WTC11 (cell line): ENCODE measurements at regions of chr17 and their contacts with region 1.

Region 1: DNA sequence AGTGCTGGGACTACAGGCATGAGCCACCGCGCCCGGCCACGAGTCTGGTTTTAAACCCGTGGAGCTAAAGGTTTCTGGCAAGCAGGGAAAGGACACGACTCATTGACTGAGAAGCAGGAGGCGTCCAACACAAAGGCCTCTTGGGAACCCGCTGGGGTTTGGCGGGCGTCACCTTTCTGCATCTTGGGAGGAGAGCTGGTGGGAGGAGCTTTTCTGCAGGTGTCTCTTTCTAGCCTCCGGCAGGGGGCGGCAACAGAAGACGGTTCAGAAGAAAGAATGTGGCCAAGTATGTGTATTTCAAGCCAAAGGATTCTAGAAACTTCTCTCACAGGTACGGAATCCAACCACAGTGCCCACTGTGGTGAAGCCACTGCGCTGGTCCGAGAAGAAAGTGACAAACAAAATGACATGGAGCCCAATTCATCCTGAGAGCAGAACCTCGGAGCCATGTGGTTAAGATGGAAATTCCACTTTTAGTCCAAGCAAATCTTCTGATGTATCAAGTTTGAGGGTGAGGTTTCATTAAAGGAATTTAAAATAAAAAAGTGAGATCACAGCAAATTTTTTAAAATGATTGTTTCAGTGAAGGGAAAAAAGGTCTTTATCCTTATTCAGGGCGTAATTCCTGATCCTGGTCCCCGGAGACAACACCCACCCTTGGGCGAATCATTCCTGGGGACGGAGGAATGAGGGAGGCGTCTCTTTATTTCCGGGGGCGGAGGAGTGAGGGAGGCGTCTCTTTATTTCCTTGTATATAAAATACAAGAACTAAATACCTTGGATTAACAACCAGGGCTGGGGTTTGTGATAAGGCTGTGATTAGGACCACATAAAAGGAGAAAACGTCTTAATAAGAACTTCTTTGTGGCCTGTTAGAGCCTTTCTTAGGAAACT is 97.6 kb downstream of the MRM3 start:
- DNase-seq: peak; percentile 94
- ATAC-seq: peak; percentile 90
- H3K4me3 Mint-ChIP-seq: peak overlapping the region; percentile 21; the same call in 1 of the 2 replicates
- H3K27ac Mint-ChIP-seq: peak overlapping the region; percentile 97
- H3K4me1 Mint-ChIP-seq: peaks cover 67% of the 10 kb centered on the region
- H3K27me3 Mint-ChIP-seq: no peaks in the 10 kb centered on the region
- CTCF ChIP-seq: peak; percentile 59

Region 2: DNA sequence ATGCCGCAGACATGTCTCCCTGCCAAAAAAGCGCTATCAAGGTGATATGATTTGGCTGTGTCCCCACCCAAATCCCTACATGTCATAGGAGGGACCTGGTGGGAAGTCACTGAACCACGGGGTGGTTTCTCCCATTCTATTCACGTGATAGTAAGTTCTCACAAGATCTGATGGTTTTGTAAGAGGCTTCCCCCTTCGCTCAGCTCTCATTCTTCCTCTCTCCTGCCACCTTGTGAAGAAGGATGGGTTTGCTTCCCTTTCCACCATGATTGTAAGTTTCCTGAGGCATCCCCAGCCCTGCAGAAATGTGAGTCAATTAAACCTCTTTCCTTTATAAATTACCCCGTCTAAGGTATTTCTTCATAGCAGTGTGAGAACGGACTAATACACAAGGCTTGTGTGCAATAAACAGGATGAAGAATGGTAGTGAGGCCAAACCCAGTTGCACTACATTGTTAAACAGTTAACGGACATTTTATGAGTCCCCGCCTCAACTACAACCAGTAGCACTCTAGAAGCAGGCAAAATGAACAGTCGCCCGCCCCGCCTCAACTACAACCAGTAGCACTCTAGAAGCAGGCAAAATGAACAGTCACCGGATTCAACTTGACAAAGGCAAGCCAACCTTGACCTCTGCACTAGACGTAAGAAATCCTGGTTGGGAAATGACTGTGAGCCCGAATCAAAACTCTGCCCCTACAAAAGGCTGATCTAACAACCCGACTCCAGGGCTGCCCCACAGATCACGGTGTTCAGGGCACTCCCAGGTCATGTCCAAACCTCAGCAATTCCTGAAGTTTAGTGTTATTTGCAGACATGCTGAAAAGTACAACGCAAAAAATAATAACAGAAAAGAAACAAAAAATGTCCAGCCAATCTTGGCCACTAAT is 191.5 kb before region 1 on chr17:
- CTCF ChIA-PET with region 1: no interaction called
- POLR2A ChIA-PET with region 1: no interaction called
- DNase-seq: peak; percentile 13
- ATAC-seq: peak; percentile 36; the same call in 1 of the 2 replicates
- H3K4me3 Mint-ChIP-seq: no peak overlapping the region
- H3K27ac Mint-ChIP-seq: peak overlapping the region; percentile 20; the same call in 1 of the 2 replicates
- H3K4me1 Mint-ChIP-seq: peaks cover 5% of the 10 kb centered on the region
- H3K27me3 Mint-ChIP-seq: no peaks in the 10 kb centered on the region
- CTCF ChIP-seq: no peak

Region 3: DNA sequence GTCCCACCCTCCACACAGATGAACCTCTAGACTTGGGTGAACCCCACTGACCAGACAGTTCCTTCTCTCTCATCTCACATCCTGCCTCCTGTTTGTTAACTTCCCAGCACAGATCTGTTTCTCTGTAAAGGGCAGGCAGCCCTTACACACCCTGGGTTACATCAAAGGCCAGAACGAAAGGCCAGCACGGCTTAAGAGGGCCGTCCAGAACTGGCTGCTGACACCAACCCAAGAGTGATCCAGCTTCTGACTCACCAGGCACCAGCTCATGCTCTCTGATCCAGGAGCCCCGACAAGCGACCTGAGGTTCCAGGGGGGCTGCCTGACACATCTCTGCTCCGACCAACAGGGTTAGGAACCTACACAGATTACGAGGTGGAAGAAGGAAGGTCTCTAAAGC is 10.7 kb before region 1 on chr17:
- CTCF ChIA-PET with region 1: interaction called, 15 read pairs
- POLR2A ChIA-PET with region 1: no interaction called
- DNase-seq: no peak
- ATAC-seq: no peak
- H3K4me3 Mint-ChIP-seq: no peak overlapping the region
- H3K27ac Mint-ChIP-seq: peak overlapping the region; percentile 53
- H3K4me1 Mint-ChIP-seq: peaks cover 2% of the 10 kb centered on the region; the same call in 1 of the 2 replicates
- H3K27me3 Mint-ChIP-seq: no peaks in the 10 kb centered on the region
- CTCF ChIP-seq: no peak

Region 4: DNA sequence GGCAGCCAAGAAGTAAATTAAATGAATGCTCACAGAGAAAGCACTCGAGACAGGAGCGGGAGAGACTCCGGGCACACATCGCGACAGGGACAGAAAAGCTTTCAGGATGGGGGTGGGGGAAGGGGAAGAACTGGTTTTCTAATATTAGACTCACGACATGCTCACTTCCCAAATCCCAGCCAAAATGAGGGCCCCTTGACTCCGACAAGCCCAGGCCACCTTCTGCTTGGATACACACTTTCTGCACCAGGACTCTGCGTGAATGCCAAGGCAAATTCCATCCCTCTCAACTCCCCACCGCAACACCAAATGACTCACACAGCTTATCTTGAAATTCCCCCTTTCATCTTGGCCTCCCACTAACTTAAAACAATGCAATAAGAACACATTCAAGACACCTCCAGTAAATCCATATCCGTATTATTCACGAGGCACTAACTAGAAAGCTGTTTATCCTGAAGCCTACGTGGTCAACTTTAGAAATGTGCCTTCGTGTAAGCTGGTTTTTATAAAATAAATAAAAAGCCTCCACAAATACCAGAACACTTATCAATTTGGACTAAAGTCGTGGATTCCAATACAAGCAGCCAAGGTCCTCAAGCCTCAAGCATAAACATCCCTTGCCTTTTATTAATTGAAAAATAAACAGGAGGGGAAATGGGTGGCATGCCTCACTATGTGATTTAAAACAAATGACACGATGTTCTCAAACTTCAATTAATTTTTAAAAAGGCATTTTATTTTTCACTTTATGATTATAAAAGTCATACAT is 53.7 kb after region 1 on chr17:
- CTCF ChIA-PET with region 1: interaction called, 17 read pairs
- POLR2A ChIA-PET with region 1: interaction called, 4 read pairs
- DNase-seq: no peak
- ATAC-seq: peak; percentile 78
- H3K4me3 Mint-ChIP-seq: peak overlapping the region; percentile 2
- H3K27ac Mint-ChIP-seq: peak overlapping the region; percentile 82
- H3K4me1 Mint-ChIP-seq: peaks cover 54% of the 10 kb centered on the region
- H3K27me3 Mint-ChIP-seq: no peaks in the 10 kb centered on the region
- CTCF ChIP-seq: no peak

Region 5: GRCh38 chr17:962670-963069 is 82.9 kb after region 1 on chr17:
- CTCF ChIA-PET with region 1: interaction called, 11 read pairs
- POLR2A ChIA-PET with region 1: no interaction called
- DNase-seq: peak; percentile 69
- ATAC-seq: peak; percentile 83
- H3K4me3 Mint-ChIP-seq: peak overlapping the region; percentile 47
- H3K27ac Mint-ChIP-seq: peak overlapping the region; percentile 98
- H3K4me1 Mint-ChIP-seq: peaks cover 66% of the 10 kb centered on the region
- H3K27me3 Mint-ChIP-seq: no peaks in the 10 kb centered on the region
- CTCF ChIP-seq: no peak

Region 6: GRCh38 chr17:1229432-1229899 is 349.7 kb after region 1 on chr17:
- CTCF ChIA-PET with region 1: no interaction called
- POLR2A ChIA-PET with region 1: no interaction called
- DNase-seq: peak; percentile 31
- ATAC-seq: peak; percentile 49
- H3K4me3 Mint-ChIP-seq: peak overlapping the region; percentile 34
- H3K27ac Mint-ChIP-seq: no peak overlapping the region
- H3K4me1 Mint-ChIP-seq: peaks cover 8% of the 10 kb centered on the region
- H3K27me3 Mint-ChIP-seq: peaks cover 77% of the 10 kb centered on the region
- CTCF ChIP-seq: no peak